B cell (primary cell): ENCODE measurements at regions of chr15 and their contacts with region 1.

Region 1: DNA sequence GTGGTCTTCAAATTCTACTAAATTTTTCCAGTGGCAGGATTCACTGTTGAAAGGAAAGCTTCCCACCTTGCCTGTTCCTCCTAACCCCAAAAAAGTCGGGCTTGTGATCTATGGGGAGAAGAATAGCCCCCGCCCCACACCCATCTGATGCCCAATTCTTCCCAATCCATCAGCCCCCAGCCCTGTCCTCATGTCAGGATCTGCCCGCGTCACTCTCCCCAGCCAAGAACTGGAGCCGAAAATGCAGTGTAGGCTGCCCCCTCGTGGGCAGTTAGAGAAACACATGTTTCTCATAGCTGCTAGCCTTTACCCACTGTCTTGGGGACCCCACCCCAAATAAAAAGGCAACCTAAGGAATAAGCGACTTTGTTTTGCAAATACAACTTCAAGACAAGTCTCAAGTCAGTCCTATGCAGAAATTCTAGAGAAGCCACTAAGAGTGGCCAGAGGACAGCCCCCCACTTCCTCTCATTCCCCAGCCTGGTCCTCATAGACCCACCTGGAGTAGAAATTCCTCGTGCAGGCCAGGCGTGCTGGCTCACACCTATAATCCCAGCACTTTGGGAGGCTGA is 13.0 kb upstream of the CSK start:
- DNase-seq: peak; percentile 75
- ATAC-seq: peak; percentile 60
- H3K4me3 ChIP-seq: no peak overlapping the region
- H3K4me3 Mint-ChIP-seq: no peak overlapping the region
- H3K27ac ChIP-seq: no peak overlapping the region
- H3K27ac Mint-ChIP-seq: peak overlapping the region; percentile 18
- H3K4me1 ChIP-seq: peaks cover 34 to 41% of the 10 kb centered on the region in 2 donors
- H3K4me1 Mint-ChIP-seq: peaks cover 36% of the 10 kb centered on the region
- H3K27me3 ChIP-seq: no peaks in the 10 kb centered on the region
- H3K27me3 Mint-ChIP-seq: no peaks in the 10 kb centered on the region
- CTCF ChIP-seq: peak; percentile 84

Region 2: GRCh38 chr15:74373731-74374647 is 394.9 kb before region 1 on chr15:
- CTCF ChIA-PET with region 1: interaction called, 41 read pairs
- POLR2A ChIA-PET with region 1: no interaction called
- intact Hi-C with region 1: loop called (anchors 1 kb)
- DNase-seq: peak; percentile 97
- ATAC-seq: peak; percentile 95
- H3K4me3 ChIP-seq: peak overlapping the region; percentile 8 to 80 (median 77)
- H3K4me3 Mint-ChIP-seq: peak overlapping the region; percentile 60
- H3K27ac ChIP-seq: peak overlapping the region; percentile 38 to 60
- H3K27ac Mint-ChIP-seq: peak overlapping the region; percentile 72
- H3K4me1 ChIP-seq: peaks cover 11 to 20% of the 10 kb centered on the region in 2 donors
- H3K4me1 Mint-ChIP-seq: peaks cover 16% of the 10 kb centered on the region
- H3K27me3 ChIP-seq: no peaks in the 10 kb centered on the region
- H3K27me3 Mint-ChIP-seq: peaks cover 13% of the 10 kb centered on the region
- CTCF ChIP-seq: peak; percentile 95

Region 3: GRCh38 chr15:74758736-74759135 is 10.1 kb before region 1 on chr15:
- CTCF ChIA-PET with region 1: interaction called, 14 read pairs
- POLR2A ChIA-PET with region 1: no interaction called
- intact Hi-C with region 1: no loop called
- DNase-seq: no peak
- ATAC-seq: no peak
- H3K4me3 ChIP-seq: no peak overlapping the region
- H3K4me3 Mint-ChIP-seq: no peak overlapping the region
- H3K27ac ChIP-seq: no peak overlapping the region
- H3K27ac Mint-ChIP-seq: no peak overlapping the region
- H3K4me1 ChIP-seq: peaks cover 0 to 4% of the 10 kb centered on the region in 2 donors
- H3K4me1 Mint-ChIP-seq: no peaks in the 10 kb centered on the region
- H3K27me3 ChIP-seq: peaks cover 0 to 17% (median 0%) of the 10 kb centered on the region in 4 experiments
- H3K27me3 Mint-ChIP-seq: peaks cover 23% of the 10 kb centered on the region
- CTCF ChIP-seq: no peak

Region 4: DNA sequence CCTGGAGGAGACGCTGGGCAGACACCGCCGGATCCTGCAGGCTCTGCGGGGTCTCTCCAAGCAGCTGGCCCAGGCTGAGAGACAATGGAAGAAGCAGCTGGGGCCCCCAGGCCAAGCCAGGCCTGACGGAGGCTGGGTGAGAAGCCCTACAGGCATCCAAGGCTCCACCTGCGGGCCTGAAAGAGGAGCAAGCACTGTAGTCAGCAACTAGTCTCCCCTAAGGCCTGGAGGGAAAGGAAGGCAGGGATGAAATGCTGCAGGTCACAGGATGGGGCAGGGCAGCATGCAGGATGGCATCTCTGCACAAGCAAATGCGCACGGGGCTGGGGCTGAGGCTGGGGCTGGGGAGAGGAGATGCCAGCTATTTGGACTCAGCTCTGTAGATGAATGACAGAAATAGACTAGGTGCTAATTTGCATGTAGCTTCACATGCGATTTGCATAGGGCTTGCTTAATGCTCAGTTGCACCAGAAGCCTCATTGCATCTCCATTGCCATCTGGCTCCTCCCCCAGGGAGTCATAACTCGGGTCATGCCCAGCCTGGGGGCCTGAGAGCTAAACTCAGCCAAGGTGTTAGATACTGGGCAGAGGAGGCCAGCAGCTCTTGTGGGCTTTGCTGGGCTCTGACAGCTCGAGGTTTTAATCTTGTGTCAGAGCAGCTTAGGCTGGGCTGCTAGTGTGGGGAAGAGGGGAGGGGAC is 52.4 kb after region 1 on chr15:
- CTCF ChIA-PET with region 1: interaction called, 30 read pairs
- POLR2A ChIA-PET with region 1: no interaction called
- intact Hi-C with region 1: no loop called
- DNase-seq: peak; percentile 74
- ATAC-seq: peak; percentile 86
- H3K4me3 ChIP-seq: peak overlapping the region in 3 of 5 experiments; percentile 11 to 25 (median 22)
- H3K4me3 Mint-ChIP-seq: peak overlapping the region; percentile 66
- H3K27ac ChIP-seq: no peak overlapping the region
- H3K27ac Mint-ChIP-seq: peak overlapping the region; percentile 39
- H3K4me1 ChIP-seq: peaks cover 35 to 40% of the 10 kb centered on the region in 2 donors
- H3K4me1 Mint-ChIP-seq: peaks cover 44% of the 10 kb centered on the region
- H3K27me3 ChIP-seq: peaks cover 0 to 22% (median 6%) of the 10 kb centered on the region in 4 experiments
- H3K27me3 Mint-ChIP-seq: peaks cover 7% of the 10 kb centered on the region
- CTCF ChIP-seq: no peak

Region 5: DNA sequence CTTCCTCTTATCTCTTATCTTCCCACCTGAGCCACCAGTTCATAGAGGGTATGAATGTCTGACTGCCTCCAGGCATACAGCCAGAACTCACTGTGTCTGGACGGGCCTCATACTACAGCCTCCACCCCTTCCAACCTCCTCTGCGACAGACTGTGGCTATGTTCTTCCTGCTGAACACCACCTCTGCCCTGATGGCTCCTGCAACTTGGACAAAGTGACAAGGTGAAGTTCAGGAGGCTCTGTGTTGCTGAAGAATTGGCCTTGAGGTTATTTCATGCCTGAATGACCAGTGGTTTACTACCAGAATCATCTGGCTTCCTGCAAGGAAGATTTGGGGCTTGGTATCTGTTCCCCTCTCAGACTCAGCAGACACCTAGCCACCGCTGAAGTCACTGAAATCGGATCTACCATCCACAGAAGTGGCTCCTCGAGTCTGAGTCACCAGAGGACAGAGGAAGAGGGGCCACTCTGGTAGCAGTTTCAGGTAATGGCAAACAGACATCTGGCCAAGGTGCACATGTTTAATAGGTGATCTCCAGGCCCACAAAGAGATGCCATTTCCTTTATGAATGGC is 88.3 kb after region 1 on chr15:
- CTCF ChIA-PET with region 1: interaction called, 23 read pairs
- POLR2A ChIA-PET with region 1: no interaction called
- intact Hi-C with region 1: no loop called
- DNase-seq: peak; percentile 61
- ATAC-seq: peak; percentile 67
- H3K4me3 ChIP-seq: no peak overlapping the region
- H3K4me3 Mint-ChIP-seq: peak overlapping the region; percentile 69
- H3K27ac ChIP-seq: peak overlapping the region in 1 of 2 donors; percentile 67
- H3K27ac Mint-ChIP-seq: peak overlapping the region; percentile 82
- H3K4me1 ChIP-seq: peaks cover 34 to 46% of the 10 kb centered on the region in 2 donors
- H3K4me1 Mint-ChIP-seq: peaks cover 40% of the 10 kb centered on the region
- H3K27me3 ChIP-seq: no peaks in the 10 kb centered on the region
- H3K27me3 Mint-ChIP-seq: no peaks in the 10 kb centered on the region
- CTCF ChIP-seq: no peak

Region 6: GRCh38 chr15:74956648-74957300 is 187.9 kb after region 1 on chr15 and contains the start of gene RPP25:
- CTCF ChIA-PET with region 1: interaction called, 87 read pairs
- POLR2A ChIA-PET with region 1: no interaction called
- intact Hi-C with region 1: no loop called
- DNase-seq: peak; percentile 84
- ATAC-seq: peak; percentile 91
- H3K4me3 ChIP-seq: peak within 1 kb of the TSS; percentile 39 to 80 (median 53)
- H3K4me3 Mint-ChIP-seq: peak within 1 kb of the TSS; percentile 85
- H3K27ac ChIP-seq: no peak within 1 kb of the TSS
- H3K27ac Mint-ChIP-seq: no peak within 1 kb of the TSS
- H3K4me1 ChIP-seq: peaks cover 38 to 40% of the 10 kb centered on the region in 2 donors
- H3K4me1 Mint-ChIP-seq: peaks cover 30% of the 10 kb centered on the region
- H3K27me3 ChIP-seq: peaks cover 0 to 64% (median 37%) of the 10 kb centered on the region in 4 experiments
- H3K27me3 Mint-ChIP-seq: peaks cover 43% of the 10 kb centered on the region
- CTCF ChIP-seq: no peak
- total RNA-seq, gene RPP25: 3.1 and 4.4 TPM in 2 replicates